Right ventricle myocardium inferior (tissue), 1 donor: ENCODE measurements at regions of chr6 and their contacts with region 1.

Region 1: GRCh38 chr6:55069132-55069781 is 105.1 kb upstream of the HCRTR2 start:
- DNase-seq: no peak
- ATAC-seq: no peak

Region 2: DNA sequence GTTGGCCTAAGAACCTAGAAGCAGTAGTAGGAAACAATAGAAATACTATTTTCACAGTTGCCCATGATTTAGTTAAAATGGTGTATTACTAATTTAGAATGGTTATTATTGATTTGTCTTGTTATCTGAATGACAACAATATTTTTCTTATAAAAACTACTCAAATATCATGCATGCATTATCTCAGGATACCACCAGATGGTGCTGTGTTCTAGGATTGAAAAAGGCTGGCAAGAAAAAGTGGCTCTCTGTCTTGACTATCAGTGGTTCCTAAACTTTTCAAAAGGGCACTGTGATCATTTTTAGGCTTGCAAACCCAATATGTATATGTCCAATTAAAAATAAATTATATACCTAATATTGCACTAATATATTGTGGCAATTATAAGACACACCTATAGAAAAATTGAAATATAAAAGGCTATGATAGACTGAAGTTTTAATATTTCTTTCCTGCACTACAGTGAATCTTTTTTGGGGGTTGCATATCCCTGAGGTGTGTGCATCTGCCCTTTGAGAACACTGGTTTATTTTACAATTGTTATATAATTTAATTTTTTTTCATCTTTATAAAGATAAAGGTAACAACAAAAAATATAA is 1089.7 kb before region 1 on chr6:
- intact Hi-C with region 1: loop called (anchors 2 kb)
- DNase-seq: no peak
- ATAC-seq: no peak

Region 3: GRCh38 chr6:54717849-54718455 is 351.3 kb before region 1 on chr6:
- intact Hi-C with region 1: loop called (anchors 5 kb)
- DNase-seq: no peak
- ATAC-seq: no peak

Region 4: DNA sequence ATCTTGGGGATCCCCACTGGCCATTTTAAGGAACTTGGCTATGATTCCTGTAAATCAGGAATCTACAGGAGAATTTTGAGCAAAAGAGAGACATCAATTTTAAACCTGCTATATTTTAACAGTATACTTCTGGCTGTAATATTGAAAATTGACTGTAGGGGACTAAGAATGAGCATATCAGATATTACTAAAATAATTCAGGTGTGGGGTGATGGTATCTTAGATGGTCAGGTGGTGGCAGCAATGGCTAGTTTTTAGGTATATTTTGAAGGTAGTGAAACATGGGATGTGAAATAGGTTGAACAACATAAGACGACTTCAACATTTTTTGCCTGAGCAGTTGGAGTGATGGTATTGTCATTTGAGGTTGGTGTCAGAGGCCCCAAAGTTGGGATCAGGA is 190.6 kb before region 1 on chr6:
- intact Hi-C with region 1: loop called (anchors 10 kb)
- DNase-seq: no peak
- ATAC-seq: no peak

Region 5: GRCh38 chr6:54937371-54937770 is 131.9 kb before region 1 on chr6:
- intact Hi-C with region 1: no loop called
- DNase-seq: no peak
- ATAC-seq: no peak

Region 6: GRCh38 chr6:55014321-55015088 is 54.8 kb before region 1 on chr6:
- intact Hi-C with region 1: loop called (anchors 5 kb)
- DNase-seq: no peak
- ATAC-seq: peak; percentile 44

Region 7: DNA sequence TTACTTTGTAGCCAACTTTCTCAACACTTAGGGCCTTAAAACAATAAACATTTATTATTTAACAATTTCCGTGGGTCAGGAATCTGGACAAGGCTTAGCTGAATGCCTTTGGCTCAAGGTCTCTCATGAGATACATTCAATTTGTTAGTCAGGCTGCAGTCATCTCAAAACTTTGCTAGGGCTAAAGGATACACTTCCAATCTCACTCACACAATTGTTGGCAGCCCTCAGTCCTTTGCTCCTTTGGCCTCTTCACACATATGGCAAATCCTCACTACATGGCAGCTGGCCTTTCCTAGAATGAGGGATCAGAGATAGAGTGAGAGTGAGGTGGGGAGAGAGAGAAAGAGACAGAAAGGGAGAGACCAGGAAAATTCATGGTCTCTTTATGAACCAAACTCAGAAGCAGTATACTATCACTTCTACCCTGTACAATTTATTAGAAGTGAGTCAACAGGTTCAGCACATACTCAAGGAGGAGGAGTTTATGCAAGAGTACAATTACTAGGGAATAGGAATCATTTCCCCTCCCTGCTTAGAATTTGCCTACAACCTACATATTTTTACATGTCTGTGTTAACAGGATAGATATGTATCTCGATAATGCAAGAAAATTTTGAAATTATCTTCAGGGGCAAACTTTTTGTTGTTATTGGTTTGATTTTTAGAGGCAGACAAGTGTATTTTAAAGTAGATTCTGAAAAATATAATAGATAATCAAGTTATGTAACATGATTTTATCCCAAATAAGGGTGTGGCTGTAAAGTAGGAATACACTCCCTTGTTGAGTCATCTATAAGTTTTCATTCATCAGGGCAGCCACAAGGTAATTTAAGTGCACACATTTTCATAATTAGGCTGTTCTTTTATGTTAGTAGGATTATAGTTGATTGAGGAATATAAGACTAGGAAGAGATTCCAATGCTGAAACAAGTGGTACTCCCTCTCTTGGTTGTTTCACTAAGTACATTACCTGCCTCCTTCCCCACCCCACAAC is 595.6 kb after region 1 on chr6:
- intact Hi-C with region 1: no loop called
- DNase-seq: no peak
- ATAC-seq: no peak